ENCODE measurements at regions of chrX and their contacts with region 1.

Region 1: DNA sequence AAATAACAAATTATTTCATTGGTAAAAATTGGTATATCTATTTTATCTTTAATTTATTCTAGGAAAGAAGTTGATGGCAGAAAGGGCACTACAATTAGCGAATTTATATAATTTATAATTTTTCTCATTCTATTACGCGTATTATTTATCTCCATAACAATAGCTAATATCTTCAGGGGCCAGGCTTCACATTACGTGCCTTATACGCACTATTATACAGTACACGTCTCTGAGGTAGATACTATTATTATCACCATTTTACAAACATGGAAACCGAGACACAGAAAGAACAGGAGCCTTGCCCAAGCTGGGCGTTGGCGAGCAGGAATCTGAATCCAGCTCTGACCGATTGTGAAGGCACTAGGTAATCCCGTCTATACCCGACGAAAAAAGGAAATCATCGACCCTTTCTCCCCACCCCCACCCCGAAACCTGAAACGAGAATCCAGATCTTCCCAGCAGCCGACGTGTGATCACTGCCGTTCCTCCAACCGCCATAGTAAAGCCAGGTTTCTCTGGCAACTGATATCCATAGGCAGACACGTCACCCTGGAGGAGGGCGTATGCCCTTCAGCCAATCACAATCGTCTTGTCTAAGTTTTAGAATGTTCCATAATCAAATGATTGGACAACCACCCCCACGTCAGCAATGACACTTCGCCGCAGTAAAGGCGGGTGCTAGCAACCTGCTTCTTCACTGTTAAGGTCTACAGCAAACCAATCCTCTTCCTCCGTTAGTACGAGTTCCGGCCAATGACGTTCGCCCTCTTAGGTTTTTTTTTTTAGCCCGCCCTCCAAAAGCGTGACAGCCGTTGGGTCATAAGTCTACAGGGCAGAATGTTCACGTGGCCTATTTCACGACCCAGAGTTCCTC is at the start of gene MORF4L2:
- DNase-seq: peak; percentile 95
- H3K4me3 Mint-ChIP-seq: no peak within 1 kb of the TSS
- H3K27ac Mint-ChIP-seq: peak within 1 kb of the TSS; percentile 91
- H3K4me1 Mint-ChIP-seq: peaks cover 8% of the 10 kb centered on the region
- H3K27me3 Mint-ChIP-seq: no peaks in the 10 kb centered on the region
- total RNA-seq, gene MORF4L2: 253 and 262 TPM in 2 replicates

Region 2: DNA sequence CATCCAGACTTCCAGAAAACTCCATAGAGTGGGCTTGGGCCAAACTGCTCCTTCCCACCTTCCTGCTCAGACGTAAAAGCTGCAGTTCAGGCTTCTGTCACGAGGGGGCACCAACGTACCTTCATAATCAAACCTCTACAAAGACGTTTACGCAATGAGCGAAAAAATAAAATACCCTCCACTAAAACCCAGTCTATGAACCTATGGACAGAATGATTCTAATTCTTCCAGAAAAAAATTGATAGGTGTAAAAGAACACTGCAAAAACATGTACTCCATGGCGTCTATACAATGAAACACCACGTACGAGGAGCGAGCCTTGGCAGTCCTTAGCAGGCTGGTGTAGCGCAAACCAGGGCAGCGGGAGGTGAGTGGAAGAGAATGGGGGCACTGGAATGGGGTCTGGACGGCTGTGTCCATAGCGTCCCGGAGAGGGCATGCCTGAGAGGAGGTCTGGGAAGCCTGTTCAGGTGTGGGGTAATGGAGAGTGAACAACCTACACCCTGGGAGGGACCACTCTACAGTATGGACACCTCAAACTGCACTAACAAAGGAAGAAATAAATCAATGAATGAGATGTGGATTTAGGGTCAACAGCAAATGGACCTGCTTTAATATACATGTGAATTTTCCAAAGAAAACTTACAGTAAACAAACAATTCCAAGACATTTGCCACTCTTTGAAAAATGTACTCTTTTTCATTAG is 152.8 kb before region 1 on chrX:
- intact Hi-C with region 1: loop called (anchors 1 kb)
- DNase-seq: peak; percentile 88
- H3K4me3 Mint-ChIP-seq: peak overlapping the region; percentile 78
- H3K27ac Mint-ChIP-seq: no peak overlapping the region
- H3K4me1 Mint-ChIP-seq: peaks cover 4% of the 10 kb centered on the region
- H3K27me3 Mint-ChIP-seq: peaks cover 5% of the 10 kb centered on the region

Region 3: GRCh38 chrX:103817502-103817901 is 131.1 kb after region 1 on chrX:
- intact Hi-C with region 1: loop called (anchors 1 kb)
- DNase-seq: peak; percentile 79
- H3K4me3 Mint-ChIP-seq: no peak overlapping the region
- H3K27ac Mint-ChIP-seq: no peak overlapping the region
- H3K4me1 Mint-ChIP-seq: no peaks in the 10 kb centered on the region
- H3K27me3 Mint-ChIP-seq: peaks cover 16% of the 10 kb centered on the region

Region 4: DNA sequence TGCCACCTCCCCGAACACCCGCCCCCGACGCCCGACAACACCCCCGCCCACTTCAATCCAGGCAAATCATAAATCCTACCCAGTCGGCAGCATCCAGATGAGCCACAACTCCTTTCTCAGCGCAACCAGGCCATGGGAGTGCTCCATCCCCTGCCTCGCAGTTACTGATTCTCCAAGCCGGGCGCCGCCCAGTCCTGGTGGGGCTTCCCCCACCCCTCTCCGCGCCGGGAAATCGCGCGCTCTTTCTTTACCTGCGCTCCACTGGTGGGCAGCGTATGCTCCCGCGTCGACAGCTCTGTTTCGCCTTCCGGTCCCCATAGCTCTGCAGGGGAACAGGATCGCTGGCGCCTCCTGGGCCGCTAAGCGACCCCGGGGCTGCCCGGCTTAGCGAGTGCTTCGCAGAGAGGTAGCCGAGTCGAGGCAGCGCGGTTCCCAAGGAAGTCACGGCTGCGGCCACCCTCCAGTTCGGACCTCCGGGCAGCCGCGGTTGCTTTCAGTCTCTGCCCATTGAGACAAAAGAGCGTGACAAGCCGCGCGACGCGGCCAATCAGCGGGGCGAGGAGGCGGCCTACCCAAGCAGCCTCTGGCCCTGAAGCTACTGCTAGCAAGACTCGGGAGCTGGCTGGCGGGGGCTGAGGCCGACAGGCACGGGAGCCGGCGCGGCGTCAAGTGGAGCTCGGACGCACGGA is 232.3 kb after region 1 on chrX:
- intact Hi-C with region 1: loop called (anchors 1 kb)
- DNase-seq: peak; percentile 88
- H3K4me3 Mint-ChIP-seq: peak overlapping the region; percentile 97
- H3K27ac Mint-ChIP-seq: peak overlapping the region; percentile 97
- H3K4me1 Mint-ChIP-seq: peaks cover 14% of the 10 kb centered on the region
- H3K27me3 Mint-ChIP-seq: no peaks in the 10 kb centered on the region

Region 5: DNA sequence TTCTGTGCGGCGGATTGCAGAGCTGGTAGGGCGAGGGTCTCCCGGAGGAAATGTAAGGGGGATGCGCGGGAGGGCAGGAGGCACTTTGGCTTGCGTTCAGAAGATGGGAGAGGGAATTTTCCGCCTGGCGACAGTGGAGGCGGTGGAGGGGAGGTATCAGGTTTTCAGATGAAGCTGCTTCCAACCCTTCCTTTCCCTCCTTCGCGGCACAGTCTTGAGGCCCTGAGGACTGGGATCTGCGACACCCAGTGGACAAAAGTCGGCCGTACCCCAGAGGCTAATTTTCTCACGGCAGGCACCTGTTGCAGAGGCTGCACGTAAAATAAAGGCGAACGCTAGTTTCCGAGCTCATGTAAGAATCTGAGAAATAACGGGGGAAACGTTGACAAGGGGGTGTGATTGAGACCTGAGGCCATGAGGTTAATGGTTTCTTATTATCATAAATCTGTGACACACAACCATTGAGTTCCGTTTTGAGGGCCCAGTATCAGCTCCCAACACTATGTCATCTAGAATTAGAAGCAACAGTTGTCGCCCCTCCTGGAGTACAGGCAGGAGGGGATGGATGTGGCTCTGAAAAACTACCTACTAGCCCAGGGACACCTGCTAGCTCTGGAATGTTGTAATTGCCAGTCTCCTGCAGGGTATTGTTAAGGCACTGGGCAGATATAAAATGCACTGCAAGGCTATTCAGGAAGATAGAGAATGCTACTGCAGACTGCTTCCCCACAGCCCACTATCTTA is 427.0 kb after region 1 on chrX:
- intact Hi-C with region 1: loop called (anchors 5 kb)
- DNase-seq: peak; percentile 81
- H3K4me3 Mint-ChIP-seq: peak overlapping the region; percentile 88
- H3K27ac Mint-ChIP-seq: peak overlapping the region; percentile 47
- H3K4me1 Mint-ChIP-seq: peaks cover 18% of the 10 kb centered on the region
- H3K27me3 Mint-ChIP-seq: peaks cover 2% of the 10 kb centered on the region